ENCODE measurements at regions of chr22 and their contacts with region 1.

Region 1: DNA sequence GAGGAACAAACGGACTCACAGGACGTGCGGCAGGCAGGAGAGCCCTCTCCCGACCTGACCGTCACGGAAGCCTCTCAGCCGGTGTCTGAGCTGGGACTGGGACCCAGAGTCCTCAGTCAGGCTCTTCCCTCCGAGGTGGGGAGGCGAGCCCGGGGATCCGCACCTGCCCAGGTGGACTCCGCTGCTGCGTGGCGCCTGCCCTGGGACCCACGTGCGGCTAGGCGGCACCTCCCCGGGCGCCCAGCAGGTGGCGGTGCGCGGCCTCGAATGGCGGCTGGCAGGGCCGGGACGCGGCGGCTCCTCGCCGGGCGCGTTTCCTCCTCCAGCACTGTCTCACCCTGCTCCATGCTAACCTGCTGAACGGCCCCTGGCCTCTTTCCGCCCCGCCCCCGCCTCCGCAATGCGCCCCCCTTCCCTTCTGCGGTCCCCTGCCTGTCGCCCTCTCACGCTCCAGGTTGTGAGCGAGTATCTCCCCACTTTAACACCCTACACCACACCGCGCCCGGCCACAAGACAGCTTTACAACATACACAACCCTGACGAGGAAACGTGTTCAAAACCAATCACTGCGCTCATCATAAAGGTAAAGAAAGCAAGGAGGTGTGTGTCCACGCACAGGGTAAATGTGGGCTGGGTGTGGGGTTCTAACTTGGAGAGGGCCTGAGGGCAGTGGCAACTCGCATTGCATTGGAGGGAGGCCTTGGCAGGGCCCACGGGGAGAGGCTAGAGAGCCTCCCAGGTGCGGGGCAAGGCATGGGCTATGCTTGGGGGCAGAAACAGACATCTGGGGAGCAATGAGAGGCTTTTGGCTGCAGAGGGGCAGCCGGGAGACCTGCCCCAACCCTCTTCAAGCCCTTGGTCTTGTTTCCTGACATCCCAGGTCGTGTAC is 25.9 kb upstream of the ATXN10 start:
- DNase-seq: peak; percentile 83
- ATAC-seq: peak; percentile 89

Region 2: GRCh38 chr22:45867118-45867905 is 221.5 kb after region 1 on chr22:
- intact Hi-C with region 1: loop called (anchors 5 kb)
- DNase-seq: no peak
- ATAC-seq: peak; percentile 48

Region 3: DNA sequence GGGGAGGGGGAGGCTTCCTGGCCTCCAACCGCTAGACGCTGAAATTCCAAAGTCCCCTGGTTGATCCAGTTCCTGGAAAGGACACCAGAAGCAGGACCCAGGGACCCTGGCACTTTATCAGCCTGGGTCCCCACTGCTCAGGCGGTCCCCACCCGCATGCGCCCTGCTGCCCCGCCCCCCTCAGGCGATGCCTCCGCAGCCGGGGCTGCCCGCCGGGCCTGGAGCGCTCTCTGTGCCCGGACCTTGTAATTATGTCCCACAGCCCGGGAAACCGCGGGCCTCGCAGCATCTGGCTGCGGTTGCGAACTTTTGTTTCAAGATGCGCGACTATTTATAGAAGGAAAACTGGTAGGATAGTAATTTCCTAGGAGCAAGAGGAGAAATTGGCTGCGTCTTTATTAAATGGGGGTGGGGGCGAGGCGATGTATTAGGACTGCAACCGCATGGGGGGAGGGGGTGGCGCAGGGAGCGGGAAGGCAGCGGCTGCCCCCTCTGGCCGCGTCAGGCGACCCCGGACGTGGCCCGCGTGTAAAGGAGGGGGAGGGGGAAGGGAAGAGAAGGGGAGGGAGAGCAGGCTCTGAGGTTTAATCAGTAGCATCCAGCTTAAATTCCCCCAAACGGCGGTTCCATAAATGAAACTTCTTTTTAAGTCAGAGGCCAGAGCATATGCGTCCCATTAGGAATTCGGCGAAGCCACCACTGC is 325.1 kb after region 1 on chr22:
- intact Hi-C with region 1: loop called (anchors 5 kb)
- DNase-seq: no peak
- ATAC-seq: no peak